Astrocyte of the cerebellum (primary cell): ENCODE measurements at regions of chr5 and their contacts with region 1.

Region 1: DNA sequence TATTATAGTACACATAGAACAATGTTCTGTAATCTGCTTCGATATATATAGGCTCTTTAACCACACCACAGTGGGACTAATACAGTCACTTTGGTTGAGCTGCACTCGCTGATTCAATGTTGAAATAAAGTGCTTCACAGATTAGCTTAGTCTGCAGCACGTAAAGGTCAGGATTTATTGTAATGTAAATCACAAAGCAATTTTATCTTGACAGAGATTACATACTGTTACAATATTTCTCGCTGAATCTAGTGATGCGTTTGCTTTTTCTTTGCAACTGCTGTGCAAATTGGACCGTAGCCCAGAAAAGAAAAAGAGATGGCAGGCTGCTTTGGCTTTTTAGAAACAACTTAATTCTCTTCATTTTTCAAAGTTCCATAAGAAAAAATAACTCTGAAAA is 52.9 kb downstream of the CETN3 start:
- DNase-seq: peak; percentile 43
- H3K4me3 ChIP-seq: no peak overlapping the region
- CTCF ChIP-seq: no peak

Region 2: DNA sequence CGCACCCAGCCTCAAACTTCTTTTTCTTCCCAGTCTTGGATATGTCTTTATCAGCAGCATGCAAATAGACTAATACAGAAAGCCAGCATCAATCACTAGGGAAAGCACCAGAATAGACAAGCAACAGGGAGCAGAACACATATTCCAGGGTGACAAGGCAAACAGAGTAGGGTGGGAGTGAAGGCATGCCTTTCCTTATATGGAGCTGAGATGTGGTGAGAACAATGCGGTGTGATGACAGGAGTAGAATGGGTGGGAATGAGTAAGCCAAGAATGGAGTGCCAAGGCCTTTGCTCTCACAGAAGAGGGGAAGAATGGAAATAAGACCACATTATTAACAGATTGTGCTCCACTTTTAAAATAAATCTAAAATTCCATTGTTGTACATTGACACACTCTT is 62.7 kb before region 1 on chr5:
- in situ Hi-C with region 1: loop called (anchors 10 kb)
- DNase-seq: peak; percentile 97
- H3K4me3 ChIP-seq: no peak overlapping the region
- CTCF ChIP-seq: no peak